ENCODE measurements at regions of chr5 and their contacts with region 1.

Region 1: DNA sequence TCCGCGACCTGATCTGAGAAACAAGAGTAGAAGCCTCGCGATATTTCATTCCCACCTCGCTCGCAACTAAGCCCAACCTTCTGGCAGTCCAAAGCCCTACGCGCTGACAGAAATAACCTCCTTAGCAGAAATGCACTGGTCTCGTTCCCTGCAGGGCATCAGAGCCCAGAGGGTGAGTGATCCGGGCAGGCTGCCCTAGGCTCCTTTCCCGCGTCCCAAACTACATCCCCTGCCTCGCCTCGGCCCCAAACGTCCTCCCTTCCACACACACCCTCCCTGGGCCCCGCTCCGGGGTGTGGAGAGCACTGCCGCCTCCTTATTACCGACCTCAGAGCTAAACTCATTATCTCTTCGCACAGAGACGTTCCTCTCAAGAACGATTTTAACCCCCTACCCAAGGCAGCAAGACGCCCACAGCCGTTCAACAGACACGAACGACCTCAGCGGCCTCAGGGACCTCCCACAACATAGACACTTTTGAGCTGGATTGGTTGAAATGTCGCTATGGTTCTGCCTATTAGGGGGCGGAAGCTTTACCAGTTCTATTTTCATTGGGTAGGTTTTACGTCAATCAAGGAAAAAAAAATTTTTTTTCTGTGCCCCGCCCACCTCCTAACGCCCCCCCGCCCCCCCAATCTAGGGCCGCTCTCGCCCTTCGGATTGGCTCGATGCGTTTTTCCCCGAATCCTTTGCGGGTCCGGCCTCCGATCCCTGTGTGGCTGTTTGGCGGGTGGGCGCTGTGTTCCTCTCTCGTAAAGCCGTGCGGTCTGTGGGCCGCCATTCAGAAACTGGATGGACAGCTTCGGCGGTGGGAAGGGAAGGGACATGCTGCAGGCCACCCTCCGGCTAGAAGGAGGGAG is at the start of gene CETN3:
- DNase-seq: peak; percentile 95
- total RNA-seq, gene CETN3: 16.0 TPM

Region 2: GRCh38 chr5:90474235-90475109 is 64.9 kb after region 1 on chr5 and contains the starts of genes MBLAC2 and POLR3G:
- intact Hi-C with region 1: loop called (anchors 5 kb)
- DNase-seq: peak; percentile 96
- total RNA-seq, gene MBLAC2: 2.9 TPM
- total RNA-seq, gene POLR3G: 0.97 TPM